ENCODE measurements at regions of chr22 and their contacts with region 1.

Region 1: DNA sequence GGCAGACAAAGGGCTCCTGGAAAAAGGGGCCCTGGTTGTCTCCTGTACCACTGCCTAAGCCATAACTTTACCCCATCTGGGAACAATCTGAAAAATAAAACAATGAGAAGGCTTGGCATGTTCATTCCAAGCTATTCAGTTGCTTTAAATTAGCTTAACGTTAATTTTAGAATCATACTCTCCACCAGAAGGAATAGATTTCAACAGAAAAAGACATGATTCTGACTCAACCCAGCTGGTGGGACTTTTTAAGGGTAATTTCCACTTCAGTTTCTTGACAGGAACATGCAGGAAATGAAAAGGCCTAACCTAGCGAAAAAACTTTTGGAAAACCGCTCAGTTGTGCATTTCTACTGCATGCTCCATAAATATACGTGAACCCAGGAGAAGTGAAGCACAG is 7.9 kb downstream of the SF3A1 start:
- DNase-seq: no peak
- H3K4me3 ChIP-seq: peak overlapping the region in 1 of 59 donors; percentile 30
- H3K27ac ChIP-seq: peak overlapping the region in 7 of 59 donors; percentile 1 to 59 (median 25)
- H3K27me3 ChIP-seq: no peaks in the 10 kb centered on the region
- CTCF ChIP-seq: no peak

Region 2: GRCh38 chr22:30381264-30381663 is 32.5 kb after region 1 on chr22:
- intact Hi-C with region 1: loop called in 1 of 2 experiments (anchors 5 kb)
- DNase-seq: no peak
- H3K4me3 ChIP-seq: no peak overlapping the region
- H3K27ac ChIP-seq: no peak overlapping the region
- H3K27me3 ChIP-seq: no peaks in the 10 kb centered on the region
- CTCF ChIP-seq: no peak